Activated B cell treated with CpG ODN at 0.5 μM for 24 hours (primary cell): ENCODE measurements at regions of chr1 and their contacts with region 1.

Region 1: GRCh38 chr1:46036894-46037839 is 95.3 kb downstream of the PIK3R3 start:
- DNase-seq: peak; percentile 82
- ATAC-seq: peak; percentile 82
- H3K4me3 Mint-ChIP-seq: no peak overlapping the region
- H3K27ac Mint-ChIP-seq: no peak overlapping the region
- H3K4me1 Mint-ChIP-seq: peaks cover 11% of the 10 kb centered on the region
- H3K27me3 Mint-ChIP-seq: no peaks in the 10 kb centered on the region
- CTCF ChIP-seq: peak; percentile 91

Region 2: GRCh38 chr1:46001081-46001785 is 35.9 kb before region 1 on chr1:
- CTCF ChIA-PET with region 1: no interaction called
- POLR2A ChIA-PET with region 1: no interaction called
- intact Hi-C with region 1: no loop called
- DNase-seq: no peak
- ATAC-seq: no peak
- H3K4me3 Mint-ChIP-seq: no peak overlapping the region
- H3K27ac Mint-ChIP-seq: no peak overlapping the region
- H3K4me1 Mint-ChIP-seq: no peaks in the 10 kb centered on the region
- H3K27me3 Mint-ChIP-seq: no peaks in the 10 kb centered on the region
- CTCF ChIP-seq: no peak

Region 3: GRCh38 chr1:46070164-46070814 is 33.1 kb after region 1 on chr1:
- CTCF ChIA-PET with region 1: no interaction called
- POLR2A ChIA-PET with region 1: no interaction called
- intact Hi-C with region 1: no loop called
- DNase-seq: no peak
- ATAC-seq: no peak
- H3K4me3 Mint-ChIP-seq: no peak overlapping the region
- H3K27ac Mint-ChIP-seq: no peak overlapping the region
- H3K4me1 Mint-ChIP-seq: peaks cover 9% of the 10 kb centered on the region
- H3K27me3 Mint-ChIP-seq: no peaks in the 10 kb centered on the region
- CTCF ChIP-seq: no peak

Region 4: GRCh38 chr1:46166521-46167462 is 129.6 kb after region 1 on chr1:
- CTCF ChIA-PET with region 1: interaction called, 15 read pairs
- POLR2A ChIA-PET with region 1: no interaction called
- intact Hi-C with region 1: no loop called
- DNase-seq: peak; percentile 31
- ATAC-seq: peak; percentile 64
- H3K4me3 Mint-ChIP-seq: peak overlapping the region; percentile 87
- H3K27ac Mint-ChIP-seq: peak overlapping the region; percentile 41
- H3K4me1 Mint-ChIP-seq: peaks cover 26% of the 10 kb centered on the region
- H3K27me3 Mint-ChIP-seq: peaks cover 9% of the 10 kb centered on the region
- CTCF ChIP-seq: no peak

Region 5: GRCh38 chr1:46179138-46180081 is 142.2 kb after region 1 on chr1:
- CTCF ChIA-PET with region 1: interaction called, 85 read pairs
- POLR2A ChIA-PET with region 1: interaction called, 4 read pairs
- intact Hi-C with region 1: loop called (anchors 1 kb)
- DNase-seq: peak; percentile 40
- ATAC-seq: peak; percentile 80
- H3K4me3 Mint-ChIP-seq: no peak overlapping the region
- H3K27ac Mint-ChIP-seq: no peak overlapping the region
- H3K4me1 Mint-ChIP-seq: peaks cover 8% of the 10 kb centered on the region
- H3K27me3 Mint-ChIP-seq: no peaks in the 10 kb centered on the region
- CTCF ChIP-seq: peak; percentile 85

Region 6: DNA sequence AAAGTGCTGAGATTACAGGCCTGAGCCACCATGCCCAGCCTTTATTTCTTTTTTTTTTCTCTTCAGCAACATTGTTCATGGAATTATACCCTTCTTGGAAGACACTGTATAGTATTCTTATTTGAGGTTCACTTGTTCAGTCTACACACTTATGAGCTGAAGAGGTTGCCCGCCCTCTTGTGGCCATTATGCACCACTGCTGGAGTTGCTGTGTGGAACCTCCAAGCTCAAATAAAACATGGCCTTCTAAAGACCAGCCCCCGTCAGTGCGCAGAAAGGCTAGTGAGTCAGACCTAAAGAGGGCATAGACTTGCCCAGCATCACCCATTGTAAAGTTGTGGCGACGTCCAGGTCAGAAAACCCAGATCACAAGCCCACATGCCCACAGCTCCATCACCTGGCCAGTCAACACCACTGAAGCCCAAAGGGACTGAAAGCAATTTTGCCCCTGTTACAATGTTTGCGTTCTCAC is 186.3 kb after region 1 on chr1:
- CTCF ChIA-PET with region 1: interaction called, 24 read pairs
- POLR2A ChIA-PET with region 1: no interaction called
- intact Hi-C with region 1: loop called (anchors 1 kb)
- DNase-seq: peak; percentile 24
- ATAC-seq: peak; percentile 93
- H3K4me3 Mint-ChIP-seq: no peak overlapping the region
- H3K27ac Mint-ChIP-seq: no peak overlapping the region
- H3K4me1 Mint-ChIP-seq: peaks cover 2% of the 10 kb centered on the region
- H3K27me3 Mint-ChIP-seq: peaks cover 4% of the 10 kb centered on the region
- CTCF ChIP-seq: no peak